K562 (cell line): ENCODE measurements at regions of chr12 and their contacts with region 1.

Region 1: GRCh38 chr12:11730299-11731041 is 81.0 kb downstream of the ETV6 start:
- DNase-seq: no peak
- ATAC-seq: no peak
- H3K4me3 ChIP-seq: no peak overlapping the region
- H3K27ac ChIP-seq: no peak overlapping the region
- H3K4me1 ChIP-seq: no peaks in the 10 kb centered on the region
- H3K27me3 ChIP-seq: no peaks in the 10 kb centered on the region
- CTCF ChIP-seq: no peak
- EP300 ChIP-seq: no peak
- POLR2A ChIP-seq: no peak
- RAD21 ChIP-seq: no peak

Region 2: GRCh38 chr12:11553871-11554533 is 176.5 kb before region 1 on chr12:
- CTCF ChIA-PET with region 1: no interaction called
- POLR2A ChIA-PET with region 1: no interaction called
- in situ Hi-C with region 1: no loop called
- intact Hi-C with region 1: no loop called
- DNase-seq: peak; percentile 34 to 54 (median 48)
- ATAC-seq: peak; percentile 64
- H3K4me3 ChIP-seq: no peak overlapping the region
- H3K27ac ChIP-seq: no peak overlapping the region
- H3K4me1 ChIP-seq: no peaks in the 10 kb centered on the region
- H3K27me3 ChIP-seq: peaks cover 3 to 4% of the 10 kb centered on the region in 2 experiments; a peak in 3 of 5 replicates
- CTCF ChIP-seq: peak; percentile 29 to 65 (median 59); a peak in 5 of 6 replicates
- EP300 ChIP-seq: no peak
- POLR2A ChIP-seq: no peak
- RAD21 ChIP-seq: peak; percentile 24 to 52; a peak in 3 of 4 replicates

Region 3: DNA sequence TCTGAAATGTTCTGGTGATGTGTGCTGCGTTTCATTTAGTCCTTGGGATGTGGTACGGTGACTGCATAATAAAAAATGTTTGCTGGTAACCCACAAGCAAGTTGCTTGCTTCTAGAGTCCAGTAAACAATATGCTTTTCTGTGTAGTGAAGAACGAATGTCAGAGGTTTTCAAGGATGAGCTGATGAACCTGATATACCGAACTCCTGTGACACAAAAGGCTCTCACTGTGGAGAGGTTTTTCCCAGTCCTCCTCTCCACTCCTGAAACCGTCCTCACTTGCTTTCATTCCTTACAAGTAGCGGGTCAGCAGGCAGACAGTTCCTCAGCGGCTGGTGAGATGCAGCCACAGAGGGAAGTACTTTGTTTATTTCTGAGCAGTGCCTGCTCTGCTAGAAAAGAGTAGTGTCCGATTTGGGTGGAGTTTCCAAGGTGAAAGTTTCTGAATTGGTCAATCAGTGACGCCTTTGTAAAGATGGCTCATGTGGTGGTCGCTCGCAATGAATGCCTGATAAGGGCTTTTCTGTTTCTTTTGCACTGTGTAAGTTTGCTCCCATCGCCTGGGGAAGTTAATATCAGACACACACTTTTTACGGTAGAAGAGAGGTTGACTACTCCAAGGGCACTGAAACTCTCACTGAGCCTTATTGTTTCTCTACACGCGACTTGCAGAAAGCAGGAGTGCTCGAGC is 78.0 kb before region 1 on chr12:
- CTCF ChIA-PET with region 1: no interaction called
- POLR2A ChIA-PET with region 1: no interaction called
- in situ Hi-C with region 1: no loop called
- intact Hi-C with region 1: no loop called
- DNase-seq: peak in 1 of 4 experiments; percentile 29
- ATAC-seq: peak; percentile 16
- H3K4me3 ChIP-seq: peak overlapping the region; percentile 77
- H3K27ac ChIP-seq: peak overlapping the region; percentile 99
- H3K4me1 ChIP-seq: peaks cover 0 to 5% of the 10 kb centered on the region in 2 experiments; a peak in 3 of 5 replicates
- H3K27me3 ChIP-seq: no peaks in the 10 kb centered on the region
- CTCF ChIP-seq: no peak
- EP300 ChIP-seq: no peak
- POLR2A ChIP-seq: no peak
- RAD21 ChIP-seq: no peak

Region 4: GRCh38 chr12:11891754-11892386 is 161.4 kb after region 1 on chr12:
- CTCF ChIA-PET with region 1: no interaction called
- POLR2A ChIA-PET with region 1: no interaction called
- in situ Hi-C with region 1: no loop called
- intact Hi-C with region 1: loop called (anchors 10 kb)
- DNase-seq: no peak
- ATAC-seq: no peak
- H3K4me3 ChIP-seq: no peak overlapping the region
- H3K27ac ChIP-seq: no peak overlapping the region
- H3K4me1 ChIP-seq: no peaks in the 10 kb centered on the region
- H3K27me3 ChIP-seq: no peaks in the 10 kb centered on the region
- CTCF ChIP-seq: peak in 1 of 3 experiments; percentile 13; a peak in 1 of 6 replicates
- EP300 ChIP-seq: no peak
- POLR2A ChIP-seq: no peak
- RAD21 ChIP-seq: 0 out of 4 replicates have a peak, but pooled peaks of 1 of the 2 experiments have one; percentile 6

Region 5: GRCh38 chr12:12010277-12011039 is 280.0 kb after region 1 on chr12:
- CTCF ChIA-PET with region 1: no interaction called
- POLR2A ChIA-PET with region 1: no interaction called
- in situ Hi-C with region 1: no loop called
- intact Hi-C with region 1: loop called (anchors 10 kb)
- DNase-seq: no peak
- ATAC-seq: no peak
- H3K4me3 ChIP-seq: no peak overlapping the region
- H3K27ac ChIP-seq: no peak overlapping the region
- H3K4me1 ChIP-seq: peaks cover 4 to 7% of the 10 kb centered on the region in 2 experiments; a peak in 3 of 5 replicates
- H3K27me3 ChIP-seq: peaks cover 0 to 10% of the 10 kb centered on the region in 2 experiments; a peak in 2 of 5 replicates
- CTCF ChIP-seq: no peak
- EP300 ChIP-seq: no peak
- POLR2A ChIP-seq: no peak
- RAD21 ChIP-seq: no peak